ENCODE measurements at regions of chr2 and their contacts with region 1.

Region 1: GRCh38 chr2:96407041-96407918 is 71.7 kb downstream of the NCAPH start:
- DNase-seq: peak; percentile 74
- H3K27ac ChIP-seq: no peak overlapping the region
- CTCF ChIP-seq: peak; percentile 80

Region 2: GRCh38 chr2:96274355-96275056 is 132.8 kb before region 1 on chr2:
- CTCF ChIA-PET with region 1: no interaction called
- POLR2A ChIA-PET with region 1: no interaction called
- DNase-seq: no peak
- H3K27ac ChIP-seq: peak overlapping the region; percentile 57
- CTCF ChIP-seq: no peak

Region 3: GRCh38 chr2:96509114-96509846 is 102.0 kb after region 1 on chr2:
- CTCF ChIA-PET with region 1: interaction called, 63 read pairs
- POLR2A ChIA-PET with region 1: no interaction called
- DNase-seq: peak; percentile 84
- H3K27ac ChIP-seq: no peak overlapping the region
- CTCF ChIP-seq: peak; percentile 96

Region 4: GRCh38 chr2:96514521-96514920 is 107.2 kb after region 1 on chr2:
- CTCF ChIA-PET with region 1: interaction called, 63 read pairs
- POLR2A ChIA-PET with region 1: no interaction called
- DNase-seq: peak; percentile 62
- H3K27ac ChIP-seq: peak overlapping the region; percentile 12; the same call in 1 of the 2 replicates
- CTCF ChIP-seq: no peak